ENCODE measurements at regions of chr1 and their contacts with region 1.

Region 1: GRCh38 chr1:198359024-198359653 is 181.3 kb downstream of the ATP6V1G3 start:
- DNase-seq: no peak
- H3K4me3 ChIP-seq: no peak overlapping the region
- H3K27ac ChIP-seq: no peak overlapping the region
- H3K4me1 ChIP-seq: no peaks in the 10 kb centered on the region
- H3K27me3 ChIP-seq: no peaks in the 10 kb centered on the region
- CTCF ChIP-seq: peak; percentile 44 to 47

Region 2: DNA sequence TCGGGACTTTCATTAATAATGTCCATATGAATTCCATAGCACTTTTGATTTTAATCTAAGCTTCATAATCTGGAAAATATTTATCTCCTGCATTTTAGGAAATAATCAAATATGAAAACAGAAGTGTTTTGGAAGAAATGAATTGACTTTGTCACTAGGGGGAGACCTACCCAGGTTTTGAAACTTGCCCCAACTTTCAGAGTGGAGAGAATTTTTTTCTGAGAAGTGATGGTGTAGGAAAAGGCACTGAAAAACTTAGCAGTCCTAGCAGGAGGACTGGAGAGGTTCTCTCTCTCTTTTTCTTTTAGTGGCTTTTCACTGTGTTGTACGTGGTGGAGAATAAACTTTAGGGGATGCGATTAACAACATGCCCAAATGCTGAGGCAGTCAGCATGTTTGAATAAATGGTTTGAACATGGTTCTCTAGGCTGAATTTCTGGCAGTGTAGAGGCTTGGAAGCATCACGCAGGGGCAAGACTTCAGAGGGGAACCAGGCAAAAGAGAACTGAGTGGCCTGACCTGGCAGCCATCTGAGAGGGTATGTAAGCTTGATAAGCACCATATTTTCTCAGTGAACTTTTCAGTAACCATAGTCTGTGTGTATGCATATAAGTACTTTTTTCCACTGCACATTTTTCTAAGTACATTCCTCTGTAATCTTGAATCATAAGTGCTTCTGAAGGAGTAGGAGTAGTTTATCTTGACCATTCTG is 270.6 kb before region 1 on chr1:
- CTCF ChIA-PET with region 1: no interaction called
- dilution Hi-C with region 1: no loop called
- in situ Hi-C with region 1: no loop called
- intact Hi-C with region 1: loop called (anchors 5 kb)
- DNase-seq: peak; percentile 45
- H3K4me3 ChIP-seq: no peak overlapping the region
- H3K27ac ChIP-seq: no peak overlapping the region
- H3K4me1 ChIP-seq: no peaks in the 10 kb centered on the region
- H3K27me3 ChIP-seq: no peaks in the 10 kb centered on the region
- CTCF ChIP-seq: peak; percentile 56 to 66

Region 3: DNA sequence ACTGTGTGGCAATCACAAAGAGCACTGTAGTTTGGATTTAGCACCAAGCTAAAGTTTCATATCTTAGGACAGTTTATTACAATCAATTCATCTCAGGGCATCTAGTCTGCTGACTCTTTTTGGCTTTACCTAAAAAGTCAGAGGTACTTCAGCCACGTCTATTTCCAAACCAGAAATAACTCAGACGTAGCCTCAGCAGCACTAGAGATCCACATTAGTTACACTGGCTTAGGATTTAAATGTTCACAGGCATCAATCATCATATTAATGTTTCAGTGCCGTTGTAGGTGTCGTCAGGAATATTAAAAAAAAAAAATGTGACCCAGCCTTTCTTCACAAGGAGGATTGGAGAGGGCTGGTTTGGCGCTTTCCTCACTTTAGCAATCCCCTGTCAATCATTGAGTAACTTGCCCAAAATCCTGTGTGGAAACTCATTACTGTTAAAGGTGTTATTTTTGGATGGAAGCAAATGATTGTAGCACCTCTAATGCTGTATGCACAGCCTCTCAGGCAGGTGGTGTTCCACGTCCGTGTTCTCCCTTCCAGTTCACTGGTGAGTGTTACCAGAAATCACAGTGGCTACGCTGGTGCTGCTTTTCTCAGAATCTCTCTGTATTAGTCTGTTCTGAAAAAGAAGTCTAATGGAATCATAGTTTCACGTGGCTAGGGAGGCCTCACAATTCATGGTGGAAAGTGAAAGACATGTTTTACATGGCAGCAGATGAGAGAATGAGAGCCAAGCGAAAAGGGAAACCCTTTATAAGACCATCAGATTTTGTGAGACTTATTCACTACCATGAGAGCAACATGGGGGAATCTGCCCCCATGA is 157.0 kb before region 1 on chr1:
- CTCF ChIA-PET with region 1: no interaction called
- dilution Hi-C with region 1: no loop called
- in situ Hi-C with region 1: no loop called
- intact Hi-C with region 1: loop called (anchors 5 kb)
- DNase-seq: no peak
- H3K4me3 ChIP-seq: no peak overlapping the region
- H3K27ac ChIP-seq: no peak overlapping the region
- H3K4me1 ChIP-seq: peaks cover 4% of the 10 kb centered on the region
- H3K27me3 ChIP-seq: no peaks in the 10 kb centered on the region
- CTCF ChIP-seq: no peak

Region 4: GRCh38 chr1:198333744-198334143 is 25.4 kb before region 1 on chr1:
- CTCF ChIA-PET with region 1: no interaction called
- dilution Hi-C with region 1: no loop called
- in situ Hi-C with region 1: no loop called
- intact Hi-C with region 1: no loop called
- DNase-seq: peak; percentile 43
- H3K4me3 ChIP-seq: no peak overlapping the region
- H3K27ac ChIP-seq: no peak overlapping the region
- H3K4me1 ChIP-seq: peaks cover 12% of the 10 kb centered on the region
- H3K27me3 ChIP-seq: no peaks in the 10 kb centered on the region
- CTCF ChIP-seq: no peak

Measured in mammary epithelial cell (primary cell).